WTC11 (cell line): ENCODE measurements at regions of chr6 and their contacts with region 1.

Region 1: GRCh38 chr6:26017632-26017966 is 55.0 kb downstream of the TRIM38 start:
- DNase-seq: peak; percentile 83
- ATAC-seq: peak; percentile 33
- H3K4me3 Mint-ChIP-seq: peak overlapping the region; percentile 76
- H3K27ac Mint-ChIP-seq: peak overlapping the region; percentile 96
- H3K4me1 Mint-ChIP-seq: peaks cover 36% of the 10 kb centered on the region
- H3K27me3 Mint-ChIP-seq: no peaks in the 10 kb centered on the region
- CTCF ChIP-seq: no peak

Region 2: DNA sequence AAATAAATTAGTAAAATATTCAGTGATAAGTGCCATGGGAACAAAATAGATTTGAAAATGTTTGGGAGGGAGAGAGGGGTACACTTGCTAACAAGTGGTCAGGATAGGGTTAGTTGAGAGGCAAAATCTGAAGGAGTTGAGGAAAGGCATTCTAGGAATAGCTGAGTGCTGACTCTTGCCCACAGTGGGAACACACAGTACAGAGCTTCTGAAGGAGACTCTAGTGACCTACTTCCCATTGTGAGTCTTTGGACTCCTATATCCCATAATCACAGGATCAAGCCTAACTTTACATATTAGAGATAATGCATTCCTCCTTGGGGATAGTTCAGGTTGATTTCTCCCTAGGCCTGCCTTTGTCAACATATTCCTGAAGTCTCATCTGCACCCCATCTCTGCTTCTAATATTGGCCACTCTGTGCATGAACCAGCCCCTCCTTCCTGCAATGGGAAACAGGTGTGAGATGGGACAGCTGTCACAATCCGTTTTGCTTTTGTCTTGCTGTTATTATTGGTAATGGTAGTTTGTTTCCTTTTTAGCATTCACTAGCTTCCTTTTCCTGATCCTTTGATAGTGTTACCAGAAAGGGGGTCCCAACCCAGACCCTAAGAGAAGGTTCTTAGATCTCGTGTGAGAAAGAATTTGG is 57.6 kb before region 1 on chr6:
- CTCF ChIA-PET with region 1: no interaction called
- POLR2A ChIA-PET with region 1: no interaction called
- DNase-seq: no peak
- ATAC-seq: no peak
- H3K4me3 Mint-ChIP-seq: no peak overlapping the region
- H3K27ac Mint-ChIP-seq: no peak overlapping the region
- H3K4me1 Mint-ChIP-seq: peaks cover 38% of the 10 kb centered on the region
- H3K27me3 Mint-ChIP-seq: peaks cover 35% of the 10 kb centered on the region
- CTCF ChIP-seq: no peak

Region 3: GRCh38 chr6:26045065-26045927 is 27.7 kb after region 1 on chr6:
- CTCF ChIA-PET with region 1: no interaction called
- POLR2A ChIA-PET with region 1: interaction called, 40 read pairs
- DNase-seq: peak; percentile 43
- ATAC-seq: peak; percentile 22; the same call in 1 of the 2 replicates
- H3K4me3 Mint-ChIP-seq: peak overlapping the region; percentile 64
- H3K27ac Mint-ChIP-seq: peak overlapping the region; percentile 95
- H3K4me1 Mint-ChIP-seq: peaks cover 42% of the 10 kb centered on the region
- H3K27me3 Mint-ChIP-seq: no peaks in the 10 kb centered on the region
- CTCF ChIP-seq: no peak